ENCODE measurements at regions of chr2 and their contacts with region 1.

Region 1: GRCh38 chr2:33321236-33321771 is 155.1 kb upstream of the RASGRP3 start:
- DNase-seq: peak; percentile 68
- H3K4me3 Mint-ChIP-seq: no peak overlapping the region
- H3K27ac Mint-ChIP-seq: peak overlapping the region; percentile 82
- H3K4me1 Mint-ChIP-seq: peaks cover 28% of the 10 kb centered on the region
- H3K27me3 Mint-ChIP-seq: peaks cover 19% of the 10 kb centered on the region

Region 2: DNA sequence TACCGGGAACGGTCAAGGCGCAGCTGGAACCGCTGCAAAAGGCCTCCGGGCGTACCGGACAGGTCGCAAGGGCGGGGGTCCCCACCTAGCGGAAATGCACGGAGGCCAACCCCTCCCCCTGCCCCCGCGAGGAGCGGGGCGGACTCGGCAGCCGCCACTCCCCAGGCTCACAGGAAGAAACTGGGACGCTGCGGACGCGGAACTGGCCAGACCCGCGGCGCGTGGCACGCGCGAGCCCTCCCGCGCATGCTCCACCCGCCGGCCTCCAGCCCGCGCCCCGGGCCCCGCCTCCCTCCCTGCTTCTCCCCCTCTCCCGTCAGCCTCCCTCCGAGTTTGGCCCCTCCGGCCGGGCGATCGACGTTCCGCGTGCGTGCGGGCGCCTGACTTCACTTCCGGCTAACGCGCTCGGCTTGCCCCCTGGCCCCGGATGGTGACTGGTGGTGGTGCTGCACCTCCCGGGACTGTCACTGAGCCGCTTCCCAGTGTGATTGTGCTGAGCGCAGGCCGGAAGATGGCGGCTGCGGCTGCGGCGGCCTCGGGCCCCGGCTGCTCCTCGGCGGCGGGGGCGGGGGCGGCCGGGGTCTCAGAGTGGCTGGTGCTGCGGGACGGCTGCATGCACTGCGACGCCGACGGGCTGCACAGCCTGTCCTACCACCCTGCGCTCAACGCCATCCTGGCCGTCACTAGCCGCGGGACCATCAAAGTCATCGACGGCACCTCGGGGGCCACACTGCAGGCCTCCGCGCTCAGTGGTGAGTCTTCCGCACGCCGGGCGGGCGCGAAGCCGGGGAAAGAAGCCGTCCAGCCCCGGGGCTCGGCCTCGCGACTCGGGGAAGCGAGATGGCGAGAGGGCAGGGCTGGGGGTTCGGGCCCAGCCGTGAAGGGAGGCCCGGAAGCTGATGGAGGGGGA is 964.3 kb before region 1 on chr2 and contains the start of gene BIRC6:
- CTCF ChIA-PET with region 1: no interaction called
- POLR2A ChIA-PET with region 1: no interaction called
- intact Hi-C with region 1: loop called (anchors 5 kb)
- DNase-seq: peak; percentile 99
- H3K4me3 Mint-ChIP-seq: peak within 1 kb of the TSS; percentile 84
- H3K27ac Mint-ChIP-seq: peak within 1 kb of the TSS; percentile 92
- H3K4me1 Mint-ChIP-seq: peaks cover 39% of the 10 kb centered on the region
- H3K27me3 Mint-ChIP-seq: no peaks in the 10 kb centered on the region
- total RNA-seq, gene BIRC6: 58.2 to 62.4 TPM

Region 3: DNA sequence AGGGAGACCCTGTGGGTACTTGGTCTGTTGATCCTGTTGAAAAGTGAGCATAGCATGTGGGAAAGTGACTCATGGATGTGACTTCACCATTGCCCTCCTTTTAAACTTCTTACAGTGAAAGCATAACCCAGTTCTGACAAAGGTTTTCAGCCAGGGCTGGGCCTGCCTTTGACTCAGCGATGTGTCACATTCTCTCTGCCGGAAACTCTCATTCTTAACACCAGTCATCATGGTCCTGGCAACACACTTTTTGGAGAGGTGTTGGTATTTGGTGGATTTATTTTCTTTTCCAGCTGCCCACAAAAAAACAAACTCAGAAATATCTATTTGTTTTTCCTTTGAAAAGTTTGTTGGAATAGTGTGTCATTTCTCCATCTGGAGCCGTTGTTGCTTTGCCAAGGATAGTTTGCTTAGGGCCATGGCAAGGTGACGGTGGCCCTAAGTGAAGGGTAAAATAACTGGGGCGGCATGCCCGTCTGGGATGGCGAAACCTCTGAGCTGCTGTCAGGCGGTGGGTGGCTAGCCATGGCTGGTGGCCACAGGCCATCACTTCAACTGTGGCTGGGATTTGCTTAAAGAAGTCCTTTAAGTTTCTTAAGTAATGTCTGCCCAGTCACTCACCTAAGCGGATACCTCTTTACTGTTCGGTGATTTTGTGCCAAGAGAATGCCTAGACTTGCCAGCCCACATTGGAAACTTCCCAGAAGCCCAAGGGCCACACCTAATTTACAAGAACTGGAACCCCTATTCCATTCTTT is 251.2 kb before region 1 on chr2:
- CTCF ChIA-PET with region 1: no interaction called
- POLR2A ChIA-PET with region 1: no interaction called
- intact Hi-C with region 1: loop called (anchors 1 kb)
- DNase-seq: peak; percentile 77
- H3K4me3 Mint-ChIP-seq: no peak overlapping the region
- H3K27ac Mint-ChIP-seq: no peak overlapping the region
- H3K4me1 Mint-ChIP-seq: peaks cover 4% of the 10 kb centered on the region
- H3K27me3 Mint-ChIP-seq: peaks cover 14% of the 10 kb centered on the region

Region 4: GRCh38 chr2:33205693-33206434 is 115.4 kb before region 1 on chr2:
- CTCF ChIA-PET with region 1: no interaction called
- POLR2A ChIA-PET with region 1: no interaction called
- intact Hi-C with region 1: no loop called
- DNase-seq: no peak
- H3K4me3 Mint-ChIP-seq: no peak overlapping the region
- H3K27ac Mint-ChIP-seq: no peak overlapping the region
- H3K4me1 Mint-ChIP-seq: no peaks in the 10 kb centered on the region
- H3K27me3 Mint-ChIP-seq: peaks cover 5% of the 10 kb centered on the region

Region 5: DNA sequence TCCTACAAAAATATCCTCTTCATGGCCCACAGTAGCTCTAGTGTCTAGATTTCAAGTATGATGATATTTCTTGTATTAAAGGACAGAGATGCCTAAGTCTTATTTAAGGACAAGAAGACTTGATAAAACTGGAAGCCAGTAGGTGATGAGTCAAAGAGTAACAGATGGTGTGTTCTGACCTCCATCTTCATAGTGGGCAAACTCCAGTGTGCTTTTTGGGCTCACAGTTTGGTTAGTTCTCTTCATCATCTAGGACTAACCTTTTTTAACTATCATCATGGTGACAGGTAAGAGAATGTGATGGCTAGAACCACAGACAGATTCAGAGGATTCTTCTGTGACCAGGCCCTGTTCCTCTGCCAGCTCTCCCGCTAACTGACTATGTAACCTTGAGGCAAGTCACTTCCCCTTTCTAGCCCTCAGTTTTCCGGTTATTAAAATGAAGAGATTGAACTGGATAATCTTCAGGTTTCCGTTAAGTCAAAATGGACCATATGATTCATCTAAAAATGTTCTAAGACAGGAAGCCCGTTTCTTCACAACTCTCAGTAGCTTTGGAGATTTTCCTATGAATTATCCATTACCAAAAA is 14.8 kb after region 1 on chr2:
- CTCF ChIA-PET with region 1: no interaction called
- POLR2A ChIA-PET with region 1: no interaction called
- intact Hi-C with region 1: loop called (anchors 1 kb)
- DNase-seq: no peak
- H3K4me3 Mint-ChIP-seq: no peak overlapping the region
- H3K27ac Mint-ChIP-seq: no peak overlapping the region
- H3K4me1 Mint-ChIP-seq: peaks cover 9% of the 10 kb centered on the region
- H3K27me3 Mint-ChIP-seq: peaks cover 30% of the 10 kb centered on the region

Region 6: DNA sequence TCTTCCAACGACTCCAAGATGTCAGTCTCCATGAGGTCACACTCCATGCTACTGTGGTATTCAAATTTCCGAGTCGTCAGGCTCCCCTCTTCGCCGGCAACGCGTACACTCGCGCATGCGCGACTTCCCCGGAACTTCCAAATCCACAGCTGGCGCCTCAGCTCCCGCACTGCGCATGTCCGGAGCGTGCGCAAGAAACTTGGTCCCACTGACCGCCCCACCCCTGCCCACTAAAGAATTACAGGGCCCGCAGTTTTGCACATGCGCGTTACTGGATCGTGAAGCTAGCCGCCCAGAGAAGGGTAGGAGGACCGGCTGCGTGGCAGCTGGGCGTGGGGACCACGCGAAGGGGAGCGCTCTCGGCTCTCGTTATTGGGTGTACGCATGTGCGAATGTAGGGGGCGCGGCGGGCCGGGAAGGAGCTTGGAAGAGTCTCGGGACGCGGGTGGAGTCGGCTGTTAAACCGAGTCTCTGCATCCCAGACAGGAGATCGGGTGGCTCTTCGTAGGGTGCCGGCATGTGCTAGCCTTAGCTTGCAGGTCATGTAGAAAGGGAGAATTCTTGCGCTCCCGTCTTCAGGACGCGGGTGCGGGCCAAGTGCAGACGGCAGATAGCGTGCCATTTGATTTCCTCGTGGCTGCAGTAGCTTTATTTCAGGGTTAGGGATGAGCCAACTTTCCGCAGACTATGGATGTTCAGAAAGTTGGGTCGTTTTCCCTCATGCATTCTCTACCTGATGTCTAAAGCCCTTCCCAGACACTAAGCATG is 278.1 kb after region 1 on chr2 and contains the start of gene FAM98A:
- CTCF ChIA-PET with region 1: no interaction called
- POLR2A ChIA-PET with region 1: no interaction called
- intact Hi-C with region 1: loop called (anchors 2 kb)
- DNase-seq: peak; percentile 99
- H3K4me3 Mint-ChIP-seq: peak within 1 kb of the TSS; percentile 90
- H3K27ac Mint-ChIP-seq: peak within 1 kb of the TSS; percentile 82
- H3K4me1 Mint-ChIP-seq: peaks cover 22% of the 10 kb centered on the region
- H3K27me3 Mint-ChIP-seq: no peaks in the 10 kb centered on the region
- total RNA-seq, gene FAM98A: 46.7 to 46.8 TPM